Activated naive CD4-positive, alpha-beta T cell treated with anti-CD3 and anti-CD28 coated beads for 36 hours (primary cell): ENCODE measurements at regions of chr7 and their contacts with region 1.

Region 1: DNA sequence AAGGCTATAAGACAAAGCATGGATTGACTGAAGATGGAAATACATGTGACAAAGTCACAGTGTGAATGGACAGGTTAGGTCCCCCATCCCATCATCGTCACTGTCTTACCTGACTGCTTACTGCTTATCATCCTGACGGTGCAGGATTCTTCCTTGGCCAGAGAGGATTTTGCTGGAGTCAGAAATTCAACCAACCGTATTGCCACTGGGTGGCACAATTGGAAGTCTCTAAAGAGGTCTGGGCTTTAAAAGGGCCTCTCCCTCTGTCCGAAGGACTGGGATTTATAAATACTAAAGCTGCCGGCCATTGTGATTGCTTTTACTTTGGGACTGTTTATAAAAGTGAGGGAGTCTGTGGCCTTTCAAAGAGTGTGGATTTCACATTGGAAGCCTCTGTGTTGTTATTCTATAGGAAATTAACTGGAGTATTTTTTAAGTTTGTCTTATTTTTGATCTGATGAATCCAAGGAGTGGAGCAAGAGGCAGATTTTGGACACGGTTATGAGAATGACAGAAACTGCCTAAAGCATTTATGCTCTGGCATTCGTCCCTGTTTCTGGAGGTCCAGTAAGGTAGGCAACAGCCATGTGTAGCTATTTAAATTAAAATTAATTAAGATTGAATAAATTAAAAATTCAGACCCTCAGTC is 113.3 kb upstream of the CREB5 start:
- DNase-seq: peak; percentile 15
- H3K4me3 Mint-ChIP-seq: no peak overlapping the region
- H3K27ac Mint-ChIP-seq: no peak overlapping the region
- H3K4me1 Mint-ChIP-seq: no peaks in the 10 kb centered on the region
- H3K27me3 Mint-ChIP-seq: peaks cover 22% of the 10 kb centered on the region

Region 2: DNA sequence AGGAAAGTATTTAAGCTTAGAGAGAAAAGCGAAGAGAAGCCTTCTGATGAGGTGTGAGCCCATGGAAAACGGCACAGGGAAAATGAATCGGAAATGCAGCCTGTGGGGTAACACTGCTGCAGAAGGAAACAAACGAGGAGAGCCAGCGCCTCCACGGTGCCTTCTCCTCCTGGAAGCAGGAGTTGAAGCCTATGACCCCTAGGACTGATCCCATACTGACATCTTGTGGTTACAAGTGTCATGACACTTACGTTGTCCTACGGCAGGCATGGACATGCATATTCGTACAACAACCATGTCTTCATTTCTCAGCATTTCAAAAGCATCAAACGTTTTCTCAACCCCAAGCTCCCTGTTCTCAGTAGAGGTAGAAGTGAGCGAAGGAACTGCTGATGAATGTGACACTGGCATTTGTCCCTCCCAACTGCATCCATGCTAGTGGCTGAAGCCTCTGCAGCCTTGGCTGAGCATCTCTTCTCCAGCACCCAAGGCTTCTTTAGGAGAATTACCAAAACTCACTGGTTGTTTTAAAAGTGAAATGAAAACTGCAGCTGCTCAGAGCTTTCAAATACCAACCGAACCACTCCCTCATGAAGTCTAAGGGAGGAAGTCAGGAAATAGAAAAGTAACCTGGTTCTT is 278.6 kb before region 1 on chr7:
- CTCF ChIA-PET with region 1: no interaction called
- intact Hi-C with region 1: no loop called
- DNase-seq: peak; percentile 60
- H3K4me3 Mint-ChIP-seq: no peak overlapping the region
- H3K27ac Mint-ChIP-seq: no peak overlapping the region
- H3K4me1 Mint-ChIP-seq: no peaks in the 10 kb centered on the region
- H3K27me3 Mint-ChIP-seq: no peaks in the 10 kb centered on the region

Region 3: DNA sequence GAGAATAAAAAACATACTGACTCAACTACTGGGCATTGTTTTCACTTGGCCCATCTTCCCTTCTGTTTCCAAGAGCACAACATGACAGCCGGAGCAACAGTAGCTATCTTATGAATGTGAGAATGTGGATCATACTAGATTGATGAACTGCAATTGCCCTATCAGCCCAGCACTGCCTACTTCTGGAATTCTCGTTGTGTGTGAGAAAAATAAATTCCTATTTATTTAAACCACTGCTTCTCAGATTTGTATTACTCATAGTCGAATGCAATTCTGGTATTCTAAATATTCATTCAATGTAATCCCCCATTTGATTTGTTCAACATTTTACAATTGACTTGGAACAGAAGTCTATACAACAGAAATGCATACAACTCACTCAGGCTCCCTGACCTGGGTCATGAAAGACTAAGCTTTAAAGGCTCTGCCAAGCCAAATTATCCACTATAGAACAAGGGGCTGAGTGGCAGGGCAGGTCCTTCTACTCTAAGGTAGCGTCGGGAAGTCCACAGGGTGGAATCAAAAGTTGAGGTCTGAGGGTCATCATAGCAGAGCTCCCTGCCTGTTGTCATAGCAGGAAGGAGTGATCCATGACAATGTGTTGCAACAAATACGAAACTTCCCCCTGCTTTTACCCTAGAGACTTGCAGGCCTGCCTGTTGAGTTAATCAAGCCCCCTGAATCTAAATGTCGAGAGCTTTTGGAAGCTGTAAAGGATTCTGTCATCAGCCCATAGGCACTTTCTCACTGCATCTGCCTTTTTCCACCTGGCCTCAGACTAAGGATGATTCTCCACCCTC is 106.0 kb before region 1 on chr7:
- CTCF ChIA-PET with region 1: no interaction called
- intact Hi-C with region 1: no loop called
- DNase-seq: no peak
- H3K4me3 Mint-ChIP-seq: no peak overlapping the region
- H3K27ac Mint-ChIP-seq: no peak overlapping the region
- H3K4me1 Mint-ChIP-seq: peaks cover 9% of the 10 kb centered on the region
- H3K27me3 Mint-ChIP-seq: peaks cover 27% of the 10 kb centered on the region

Region 4: GRCh38 chr7:28364082-28364481 is 65.1 kb after region 1 on chr7:
- CTCF ChIA-PET with region 1: interaction called, 11 read pairs
- intact Hi-C with region 1: loop called (anchors 1 kb)
- DNase-seq: no peak
- H3K4me3 Mint-ChIP-seq: no peak overlapping the region
- H3K27ac Mint-ChIP-seq: no peak overlapping the region
- H3K4me1 Mint-ChIP-seq: peaks cover 3% of the 10 kb centered on the region
- H3K27me3 Mint-ChIP-seq: peaks cover 7% of the 10 kb centered on the region

Region 5: DNA sequence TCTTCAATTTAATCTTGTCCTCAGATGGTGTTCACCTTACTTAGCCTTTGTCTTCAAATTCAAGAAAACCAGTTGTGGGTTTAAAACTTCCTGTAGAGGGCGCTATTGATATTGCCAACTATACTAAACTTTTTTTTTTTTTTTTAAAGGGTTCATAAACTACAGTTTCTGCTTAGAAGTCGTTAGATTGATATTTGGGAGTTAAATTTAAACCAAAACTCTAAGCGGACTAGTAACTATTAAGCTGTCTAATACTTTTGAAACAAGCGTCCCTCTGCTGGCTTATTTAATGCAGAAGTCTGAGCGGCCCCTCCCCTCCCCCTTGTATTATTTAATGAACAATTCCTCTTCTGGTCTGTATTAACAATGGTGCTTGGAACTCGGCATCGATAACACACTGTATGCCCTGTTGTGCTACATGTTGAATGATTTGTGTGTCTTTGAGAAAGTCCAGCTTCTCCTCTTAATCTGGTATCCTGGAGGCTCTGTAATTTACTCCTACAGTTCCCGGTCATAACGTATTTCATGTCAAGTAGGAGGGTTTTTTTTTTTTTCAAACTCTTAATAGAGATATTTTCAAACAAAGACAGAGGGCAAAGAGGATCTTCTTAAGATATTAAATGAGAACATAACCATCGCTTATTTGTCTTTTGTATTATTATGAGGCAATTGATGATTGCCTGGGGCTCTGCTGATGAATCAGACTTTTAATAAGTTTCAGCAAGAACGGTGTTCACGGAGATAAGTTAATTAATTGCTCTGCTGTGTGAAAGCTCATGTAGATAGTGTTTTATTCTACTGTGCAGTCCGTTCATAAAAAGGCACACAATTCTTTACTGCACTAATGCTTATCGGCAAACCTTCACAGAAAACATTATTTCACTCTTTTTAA is 90.8 kb after region 1 on chr7:
- CTCF ChIA-PET with region 1: interaction called, 5 read pairs
- intact Hi-C with region 1: loop called (anchors 2 kb)
- DNase-seq: no peak
- H3K4me3 Mint-ChIP-seq: no peak overlapping the region
- H3K27ac Mint-ChIP-seq: no peak overlapping the region
- H3K4me1 Mint-ChIP-seq: peaks cover 2% of the 10 kb centered on the region
- H3K27me3 Mint-ChIP-seq: peaks cover 31% of the 10 kb centered on the region

Region 6: DNA sequence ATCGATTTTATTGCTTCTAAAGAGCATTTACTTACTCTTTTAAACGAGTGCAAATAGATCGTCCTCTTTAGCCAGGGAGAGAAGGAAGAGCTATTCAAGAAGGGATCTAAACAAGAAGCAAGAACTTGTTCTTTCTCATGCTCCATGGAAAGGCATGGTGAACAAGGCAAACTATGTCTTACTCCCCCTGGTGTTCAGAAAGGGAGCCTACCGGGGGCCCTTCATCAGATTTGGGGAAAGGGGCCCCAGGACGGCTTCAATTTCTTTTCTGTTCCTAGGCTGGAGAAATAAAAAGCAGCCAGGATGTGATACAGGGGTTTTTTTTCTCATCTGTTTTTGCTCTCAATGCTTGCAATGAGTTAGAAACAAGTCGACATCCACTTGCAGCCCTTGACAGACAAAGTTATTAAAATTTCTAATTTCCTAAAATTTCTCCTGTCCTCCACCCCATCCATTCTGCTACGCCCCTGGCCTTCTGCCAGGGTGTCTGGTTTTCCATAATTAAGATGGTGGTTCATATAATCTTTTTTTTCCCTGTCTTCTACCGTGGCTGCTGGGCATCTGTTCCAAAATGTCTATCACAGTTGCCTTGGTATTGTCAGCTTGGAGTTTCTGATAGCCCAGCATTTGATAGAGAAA is 327.7 kb after region 1 on chr7:
- CTCF ChIA-PET with region 1: no interaction called
- intact Hi-C with region 1: loop called (anchors 2 kb)
- DNase-seq: peak; percentile 39
- H3K4me3 Mint-ChIP-seq: no peak overlapping the region
- H3K27ac Mint-ChIP-seq: no peak overlapping the region
- H3K4me1 Mint-ChIP-seq: no peaks in the 10 kb centered on the region
- H3K27me3 Mint-ChIP-seq: peaks cover 18% of the 10 kb centered on the region

Region 7: DNA sequence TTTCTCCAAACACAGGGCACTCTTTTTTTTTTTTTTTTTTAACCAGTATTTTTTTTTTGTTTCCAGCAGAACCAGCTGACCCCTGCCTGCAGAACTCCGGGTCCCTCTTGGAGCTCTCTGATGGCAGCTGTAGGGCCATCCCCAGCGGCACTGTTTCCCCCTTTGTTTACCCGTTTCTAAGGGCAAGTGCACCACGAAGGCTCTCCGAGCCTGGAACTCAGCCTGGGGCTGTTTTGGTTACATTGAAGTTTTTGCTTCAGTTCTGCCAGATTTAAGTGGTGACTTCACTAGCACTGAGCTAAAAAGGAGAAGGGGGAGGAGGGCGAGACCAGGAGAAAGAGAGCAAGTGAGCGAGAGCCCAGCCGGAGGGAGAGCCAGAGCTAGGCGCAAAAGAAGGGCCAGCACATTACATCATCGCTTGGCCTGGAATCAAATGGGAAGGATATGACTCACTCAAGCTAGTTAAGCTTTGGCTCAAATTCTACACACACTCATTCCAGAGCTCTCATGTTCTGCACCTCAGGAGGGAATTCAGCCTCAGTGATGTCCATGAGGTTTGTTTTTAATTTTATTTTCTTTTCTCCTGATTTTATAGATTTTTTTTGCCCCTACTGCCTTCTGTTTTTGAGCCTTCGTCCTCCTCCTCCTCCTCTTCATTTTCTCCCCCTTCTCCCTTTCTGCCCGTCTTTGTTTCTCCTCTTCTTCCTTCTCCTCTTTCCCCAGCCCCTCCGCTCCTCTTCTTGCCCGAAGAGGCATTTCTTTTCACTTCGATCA is 386.8 kb after region 1 on chr7:
- CTCF ChIA-PET with region 1: no interaction called
- intact Hi-C with region 1: loop called (anchors 5 kb)
- DNase-seq: peak; percentile 40
- H3K4me3 Mint-ChIP-seq: no peak overlapping the region
- H3K27ac Mint-ChIP-seq: no peak overlapping the region
- H3K4me1 Mint-ChIP-seq: no peaks in the 10 kb centered on the region
- H3K27me3 Mint-ChIP-seq: peaks cover 24% of the 10 kb centered on the region

Region 8: DNA sequence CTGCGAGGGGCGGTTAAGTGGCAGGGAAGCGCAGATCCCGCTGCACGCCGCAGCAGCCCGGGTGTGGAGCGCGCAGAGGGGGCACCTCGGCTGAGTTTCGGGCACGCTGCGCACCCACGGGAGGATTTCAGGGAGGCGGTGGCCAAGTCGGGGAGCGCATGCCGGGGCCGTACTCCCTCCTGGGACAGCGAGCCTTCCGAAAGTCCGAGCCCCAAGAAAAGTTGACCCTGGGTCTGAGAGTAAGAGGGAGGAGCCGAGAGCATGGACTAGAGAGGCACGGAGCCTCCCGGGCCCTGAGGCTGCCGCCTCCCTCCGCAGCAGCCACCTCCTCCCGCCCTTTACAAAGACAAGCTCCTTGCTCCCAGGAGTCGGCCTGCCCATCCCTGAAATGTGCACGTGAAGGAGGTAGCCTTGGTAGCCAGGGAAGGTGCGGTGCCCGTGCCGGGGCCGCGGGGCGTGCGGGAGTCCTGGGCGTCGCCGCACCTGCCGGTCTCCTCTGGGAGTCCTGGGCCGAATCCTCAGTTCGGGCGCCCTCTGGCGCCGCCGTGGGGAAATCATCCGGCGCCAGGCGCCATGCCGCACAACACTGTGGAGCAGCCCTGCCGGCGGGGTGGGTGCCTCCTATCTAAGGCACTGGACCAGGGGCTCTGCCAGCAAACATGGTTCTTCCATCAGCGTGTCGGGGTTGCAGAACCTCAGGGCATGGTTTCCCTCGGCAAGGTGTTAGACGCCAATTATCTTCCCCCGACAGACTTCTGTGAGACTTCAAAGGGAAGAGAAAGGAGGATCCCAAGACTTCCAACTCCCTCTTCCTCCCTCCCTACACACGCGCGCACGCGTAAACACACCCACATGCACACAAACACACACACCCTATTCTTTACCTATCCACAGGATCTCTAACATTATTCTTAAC is 555.1 kb after region 1 on chr7:
- CTCF ChIA-PET with region 1: no interaction called
- intact Hi-C with region 1: loop called (anchors 1 kb)
- DNase-seq: peak; percentile 76
- H3K4me3 Mint-ChIP-seq: peak overlapping the region; percentile 45
- H3K27ac Mint-ChIP-seq: no peak overlapping the region
- H3K4me1 Mint-ChIP-seq: peaks cover 11% of the 10 kb centered on the region
- H3K27me3 Mint-ChIP-seq: peaks cover 47% of the 10 kb centered on the region

Region 9: GRCh38 chr7:28976022-28976421 is 677.0 kb after region 1 on chr7:
- CTCF ChIA-PET with region 1: no interaction called
- intact Hi-C with region 1: no loop called
- DNase-seq: no peak
- H3K4me3 Mint-ChIP-seq: no peak overlapping the region
- H3K27ac Mint-ChIP-seq: no peak overlapping the region
- H3K4me1 Mint-ChIP-seq: no peaks in the 10 kb centered on the region
- H3K27me3 Mint-ChIP-seq: peaks cover 7% of the 10 kb centered on the region